Activated CD4-positive, alpha-beta T cell treated with anti-CD3 and anti-CD28 coated beads for 36 hours (primary cell): ENCODE measurements at regions of chr7 and their contacts with region 1.

Region 1: DNA sequence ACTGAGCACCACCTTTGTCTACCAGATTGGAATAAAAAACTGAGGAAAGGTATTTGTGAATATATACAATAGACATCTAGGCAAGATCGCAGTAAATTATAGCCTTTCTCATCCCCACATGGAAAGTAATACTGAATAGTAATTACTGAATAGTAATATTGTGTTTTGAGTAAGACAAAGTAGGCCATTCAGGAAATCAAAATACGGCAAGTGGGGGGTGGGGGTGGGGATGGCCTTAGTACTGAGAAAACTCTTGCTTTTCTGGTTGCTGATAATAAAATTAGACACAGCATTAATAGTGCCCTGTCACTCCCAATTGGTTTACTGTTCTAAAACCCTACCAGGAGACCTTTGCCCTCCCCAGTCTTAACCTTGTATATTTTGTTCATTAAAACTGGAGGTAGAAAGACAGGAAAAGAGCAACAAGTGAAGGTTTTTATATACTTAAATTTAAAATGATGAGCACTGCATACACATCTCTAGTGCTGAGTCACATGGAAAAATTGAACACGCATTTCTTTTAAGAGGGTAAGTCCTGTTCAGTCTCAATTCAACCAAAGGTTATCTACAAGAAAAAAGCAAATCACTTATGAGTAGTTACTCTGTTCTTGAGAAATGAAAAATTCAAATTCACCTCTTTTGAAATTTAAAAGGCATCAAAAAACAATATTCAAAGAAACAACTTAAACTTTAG is 65.6 kb downstream of the IGF2BP3 start:
- DNase-seq: peak; percentile 46
- ATAC-seq: peak; percentile 90
- H3K4me3 Mint-ChIP-seq: no peak overlapping the region
- H3K27ac Mint-ChIP-seq: peak overlapping the region; percentile 85
- H3K4me1 Mint-ChIP-seq: peaks cover 28% of the 10 kb centered on the region
- H3K27me3 Mint-ChIP-seq: no peaks in the 10 kb centered on the region

Region 2: GRCh38 chr7:23394488-23395171 is 10.1 kb before region 1 on chr7:
- CTCF ChIA-PET with region 1: interaction called, 4 read pairs
- POLR2A ChIA-PET with region 1: no interaction called
- intact Hi-C with region 1: loop called (anchors 1 to 2 kb)
- DNase-seq: no peak
- ATAC-seq: no peak
- H3K4me3 Mint-ChIP-seq: no peak overlapping the region
- H3K27ac Mint-ChIP-seq: no peak overlapping the region
- H3K4me1 Mint-ChIP-seq: peaks cover 28% of the 10 kb centered on the region
- H3K27me3 Mint-ChIP-seq: peaks cover 6% of the 10 kb centered on the region